RWPE1 (cell line): ENCODE measurements at regions of chr12 and their contacts with region 1.

Region 1: DNA sequence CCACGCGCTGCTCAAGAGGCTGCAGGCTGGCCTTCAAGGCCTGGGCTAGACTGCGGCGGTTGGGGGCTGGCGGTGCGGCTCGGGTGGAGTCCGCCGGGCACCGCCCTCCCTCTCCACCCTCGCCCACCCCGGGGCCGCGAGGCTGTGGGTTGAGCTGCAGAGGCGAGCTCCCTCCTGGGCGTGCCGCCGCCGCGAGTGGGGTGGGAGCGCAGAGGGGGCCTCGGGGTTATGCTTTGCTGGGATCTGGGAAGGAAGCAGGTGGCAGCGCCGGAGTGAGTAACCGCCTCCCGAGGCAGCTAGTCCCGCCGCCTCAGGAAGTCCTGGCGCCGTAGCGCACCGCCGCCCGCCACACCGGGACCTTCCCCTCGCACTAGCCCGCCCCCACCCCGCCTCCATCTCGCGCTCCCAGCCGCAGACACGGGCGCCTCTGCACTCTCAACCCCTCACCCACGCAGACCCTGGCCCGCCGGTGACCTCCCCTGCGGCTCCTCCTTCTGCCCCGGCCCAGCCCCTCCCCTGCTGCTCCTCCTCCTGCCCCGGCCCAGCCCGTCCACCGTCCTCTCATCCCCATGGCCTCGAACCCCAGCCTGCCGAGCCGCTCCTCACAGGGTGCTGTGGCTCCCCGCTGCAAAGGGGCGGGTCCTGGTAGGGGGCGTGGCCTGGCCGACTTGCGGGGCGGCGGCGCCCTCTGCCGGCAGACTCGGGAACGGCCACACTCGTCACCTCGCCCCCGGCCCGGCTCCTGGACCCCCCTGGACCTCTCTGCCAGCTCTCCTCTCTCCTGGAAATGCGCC is 16.6 kb downstream of the TAMALIN start:
- DNase-seq: peak; percentile 85
- H3K27ac ChIP-seq: no peak overlapping the region
- CTCF ChIP-seq: peak; percentile 96

Region 2: DNA sequence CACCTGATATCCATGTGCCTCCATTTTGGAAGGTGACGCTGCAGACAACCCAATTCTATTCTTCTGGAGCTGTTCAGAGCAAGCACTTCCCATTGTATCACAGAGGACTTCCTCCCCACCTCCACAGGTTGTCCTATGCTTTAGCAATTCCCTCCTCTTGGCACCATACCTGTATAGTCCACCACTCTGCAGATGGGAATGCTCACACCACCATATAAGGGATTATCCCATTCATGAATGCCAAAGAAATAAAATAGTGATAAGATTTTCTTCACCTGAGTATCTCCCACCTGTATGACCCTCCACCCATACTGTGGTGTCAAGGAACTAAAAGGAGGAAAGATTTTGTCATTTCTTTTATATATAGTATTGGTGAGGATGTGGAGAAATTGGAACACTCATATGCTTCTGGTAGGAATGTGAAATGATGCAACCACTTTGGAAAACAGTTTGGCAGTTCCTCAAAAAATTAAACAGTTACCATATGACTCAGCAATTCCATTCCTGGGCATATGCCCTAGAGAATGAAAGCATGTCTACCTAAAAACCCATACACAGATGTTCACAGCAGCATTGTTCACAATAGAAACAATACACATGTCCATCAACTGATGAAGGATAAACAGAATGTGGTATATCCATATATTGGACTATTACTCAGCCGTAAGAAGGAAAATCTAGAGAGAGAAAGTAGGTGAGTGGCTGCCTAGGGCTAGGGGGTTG is 250.1 kb before region 1 on chr12:
- CTCF ChIA-PET with region 1: no interaction called
- POLR2A ChIA-PET with region 1: no interaction called
- DNase-seq: peak; percentile 44
- H3K27ac ChIP-seq: peak overlapping the region; percentile 52
- CTCF ChIP-seq: no peak

Region 3: DNA sequence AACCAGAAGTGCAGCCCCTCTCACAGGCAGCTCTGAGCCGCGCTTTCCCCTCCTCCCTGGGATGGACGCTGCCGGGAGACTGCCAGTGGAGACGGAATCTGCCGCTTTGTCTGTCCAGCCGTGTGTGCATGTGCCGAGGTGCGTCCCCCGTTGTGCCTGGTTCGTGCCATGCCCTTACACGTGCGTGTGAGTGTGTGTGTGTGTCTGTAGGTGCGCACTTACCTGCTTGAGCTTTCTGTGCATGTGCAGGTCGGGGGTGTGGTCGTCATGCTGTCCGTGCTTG is 28.9 kb before region 1 on chr12:
- CTCF ChIA-PET with region 1: interaction called, 13 read pairs
- POLR2A ChIA-PET with region 1: no interaction called
- DNase-seq: no peak
- H3K27ac ChIP-seq: no peak overlapping the region
- CTCF ChIP-seq: no peak

Region 4: DNA sequence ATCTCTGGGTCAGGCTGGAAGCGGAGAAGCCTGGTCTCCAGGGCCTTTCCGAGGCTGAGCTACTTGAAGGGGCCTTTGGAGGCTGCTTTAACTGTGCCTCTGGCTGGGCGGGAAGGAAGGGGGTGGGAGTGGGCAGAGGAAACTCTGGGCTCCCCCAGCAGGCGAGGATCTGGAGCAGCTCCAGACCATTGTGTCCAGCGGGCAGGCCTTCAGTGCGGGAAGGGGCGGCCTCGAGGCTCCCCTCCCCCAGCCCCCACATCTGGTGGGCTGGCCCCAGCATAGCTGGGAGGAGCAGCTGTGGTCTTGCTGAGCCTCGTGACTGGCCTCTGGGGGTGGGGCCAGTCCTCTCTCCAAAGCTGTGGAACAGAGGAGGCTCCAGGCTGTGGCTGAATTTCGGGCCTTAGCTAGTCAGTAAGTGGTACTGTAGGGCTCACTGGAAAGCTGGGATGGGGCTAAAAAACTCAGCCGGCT is 13.2 kb before region 1 on chr12:
- CTCF ChIA-PET with region 1: interaction called, 75 read pairs
- POLR2A ChIA-PET with region 1: no interaction called
- DNase-seq: no peak
- H3K27ac ChIP-seq: no peak overlapping the region
- CTCF ChIP-seq: no peak

Region 5: GRCh38 chr12:52050761-52051541 is 27.6 kb after region 1 on chr12 and contains the start of gene NR4A1:
- CTCF ChIA-PET with region 1: interaction called, 19 read pairs
- POLR2A ChIA-PET with region 1: no interaction called
- DNase-seq: peak; percentile 98
- H3K27ac ChIP-seq: peak within 1 kb of the TSS; percentile 76
- CTCF ChIP-seq: no peak; the same call in 1 of the 2 replicates

Region 6: DNA sequence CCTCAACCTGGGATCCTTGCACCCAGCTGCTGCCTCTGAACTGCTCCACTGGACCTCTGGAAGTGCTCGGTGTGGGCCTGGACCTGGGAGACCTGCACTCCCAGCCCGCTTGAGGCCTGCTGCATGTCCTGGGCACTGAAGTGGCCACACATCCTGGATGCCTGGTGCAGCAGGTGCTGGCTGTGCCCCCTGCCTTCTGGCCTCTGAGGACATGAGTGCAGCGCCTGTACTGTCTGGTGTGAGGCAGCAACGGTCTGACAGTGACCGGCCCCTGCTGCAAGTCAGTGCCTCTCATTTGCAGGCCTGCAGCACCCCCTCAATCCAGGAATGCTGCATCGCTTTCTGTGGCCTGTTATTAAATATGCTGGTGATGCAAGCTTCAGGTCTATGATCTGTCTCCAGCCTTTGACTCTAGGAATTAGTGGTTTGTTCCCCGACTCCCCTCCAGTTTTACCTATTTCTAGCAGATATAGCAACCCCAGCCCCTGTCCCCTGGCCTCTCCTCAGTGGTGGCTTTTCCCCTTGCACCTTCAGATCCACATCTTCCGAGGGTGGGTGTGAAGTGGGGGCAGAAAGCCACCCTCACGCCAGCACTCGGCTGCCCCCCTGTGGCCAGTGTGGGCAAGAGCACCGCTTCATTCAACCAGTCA is 59.7 kb after region 1 on chr12:
- CTCF ChIA-PET with region 1: interaction called, 56 read pairs
- POLR2A ChIA-PET with region 1: no interaction called
- DNase-seq: peak; percentile 69
- H3K27ac ChIP-seq: no peak overlapping the region; the same call in 1 of the 2 replicates
- CTCF ChIP-seq: peak; percentile 98

Region 7: GRCh38 chr12:52121824-52122539 is 98.6 kb after region 1 on chr12:
- CTCF ChIA-PET with region 1: interaction called, 35 read pairs
- POLR2A ChIA-PET with region 1: no interaction called
- DNase-seq: peak; percentile 59
- H3K27ac ChIP-seq: no peak overlapping the region
- CTCF ChIP-seq: peak; percentile 84